B cell (primary cell): ENCODE measurements at regions of chr4 and their contacts with region 1.

Region 1: DNA sequence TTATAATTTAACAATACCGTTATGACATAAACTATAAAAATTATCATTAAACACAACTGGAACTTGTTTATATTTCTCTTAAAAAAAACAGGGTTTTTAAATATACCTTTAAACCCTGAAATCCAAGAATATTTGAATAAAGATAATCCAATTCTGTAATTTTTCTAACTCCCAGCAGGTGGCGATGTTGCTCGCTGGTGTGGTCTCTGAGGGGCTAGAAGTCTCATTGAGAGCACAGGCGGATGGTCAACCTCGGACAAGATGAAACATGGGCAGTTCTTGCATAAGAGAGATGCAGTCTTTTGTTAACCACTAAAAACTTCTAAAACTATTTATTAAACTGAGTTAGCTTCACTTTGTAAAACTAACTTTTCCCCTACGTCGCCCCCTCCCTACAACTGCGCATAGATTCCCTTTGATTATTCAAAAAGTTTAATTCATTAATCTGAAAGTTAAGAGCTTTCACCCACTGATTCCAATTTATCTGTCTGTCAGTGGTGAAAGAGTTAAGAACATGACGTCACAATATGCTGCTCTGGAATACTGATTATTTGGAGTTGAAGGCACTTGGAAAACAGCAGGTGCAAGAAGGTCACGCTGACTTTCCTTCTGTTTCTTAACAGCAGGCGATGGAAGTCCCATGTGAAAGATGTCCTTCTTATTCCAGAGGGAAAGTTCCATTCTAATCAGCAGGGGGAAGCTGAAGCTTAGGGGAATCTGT is 29.5 kb downstream of the DMP1 start:
- DNase-seq: peak; percentile 41
- ATAC-seq: no peak
- H3K4me3 ChIP-seq: no peak overlapping the region
- H3K4me3 Mint-ChIP-seq: no peak overlapping the region
- H3K27ac ChIP-seq: no peak overlapping the region
- H3K27ac Mint-ChIP-seq: no peak overlapping the region
- H3K4me1 ChIP-seq: no peaks in the 10 kb centered on the region
- H3K4me1 Mint-ChIP-seq: peaks cover 2% of the 10 kb centered on the region
- H3K27me3 ChIP-seq: no peaks in the 10 kb centered on the region
- H3K27me3 Mint-ChIP-seq: no peaks in the 10 kb centered on the region
- CTCF ChIP-seq: peak; percentile 86

Region 2: GRCh38 chr4:87326460-87326859 is 353.1 kb before region 1 on chr4:
- CTCF ChIA-PET with region 1: no interaction called
- POLR2A ChIA-PET with region 1: no interaction called
- intact Hi-C with region 1: no loop called
- DNase-seq: no peak
- ATAC-seq: no peak
- H3K4me3 ChIP-seq: no peak overlapping the region
- H3K4me3 Mint-ChIP-seq: no peak overlapping the region
- H3K27ac ChIP-seq: no peak overlapping the region
- H3K27ac Mint-ChIP-seq: no peak overlapping the region
- H3K4me1 ChIP-seq: no peaks in the 10 kb centered on the region
- H3K4me1 Mint-ChIP-seq: no peaks in the 10 kb centered on the region
- H3K27me3 ChIP-seq: no peaks in the 10 kb centered on the region
- H3K27me3 Mint-ChIP-seq: no peaks in the 10 kb centered on the region
- CTCF ChIP-seq: no peak

Region 3: GRCh38 chr4:87838890-87839591 is 159.4 kb after region 1 on chr4:
- CTCF ChIA-PET with region 1: no interaction called
- POLR2A ChIA-PET with region 1: no interaction called
- intact Hi-C with region 1: loop called (anchors 10 kb)
- DNase-seq: peak; percentile 16
- ATAC-seq: no peak
- H3K4me3 ChIP-seq: no peak overlapping the region
- H3K4me3 Mint-ChIP-seq: no peak overlapping the region
- H3K27ac ChIP-seq: no peak overlapping the region
- H3K27ac Mint-ChIP-seq: no peak overlapping the region
- H3K4me1 ChIP-seq: no peaks in the 10 kb centered on the region
- H3K4me1 Mint-ChIP-seq: no peaks in the 10 kb centered on the region
- H3K27me3 ChIP-seq: no peaks in the 10 kb centered on the region
- H3K27me3 Mint-ChIP-seq: peaks cover 18% of the 10 kb centered on the region
- CTCF ChIP-seq: peak; percentile 75

Region 4: GRCh38 chr4:89029591-89029990 is 1350.0 kb after region 1 on chr4:
- CTCF ChIA-PET with region 1: no interaction called
- POLR2A ChIA-PET with region 1: no interaction called
- intact Hi-C with region 1: loop called (anchors 5 kb)
- DNase-seq: no peak
- ATAC-seq: no peak
- H3K4me3 ChIP-seq: no peak overlapping the region
- H3K4me3 Mint-ChIP-seq: no peak overlapping the region
- H3K27ac ChIP-seq: no peak overlapping the region
- H3K27ac Mint-ChIP-seq: no peak overlapping the region
- H3K4me1 ChIP-seq: no peaks in the 10 kb centered on the region
- H3K4me1 Mint-ChIP-seq: no peaks in the 10 kb centered on the region
- H3K27me3 ChIP-seq: no peaks in the 10 kb centered on the region
- H3K27me3 Mint-ChIP-seq: peaks cover 3% of the 10 kb centered on the region
- CTCF ChIP-seq: no peak